ENCODE measurements at regions of chr12 and their contacts with region 1.

Region 1: GRCh38 chr12:119036878-119037825 is 55.8 kb downstream of the SRRM4 start:
- DNase-seq: peak in 1 of 2 experiments; percentile 74
- H3K4me3 ChIP-seq: no peak overlapping the region
- H3K27ac ChIP-seq: no peak overlapping the region
- H3K4me1 ChIP-seq: no peaks in the 10 kb centered on the region
- H3K27me3 ChIP-seq: no peaks in the 10 kb centered on the region
- CTCF ChIP-seq: peak; percentile 53 to 69 (median 65)
- EP300 ChIP-seq: no peak
- POLR2A ChIP-seq: no peak
- RAD21 ChIP-seq: peak; percentile 41 to 60

Region 2: DNA sequence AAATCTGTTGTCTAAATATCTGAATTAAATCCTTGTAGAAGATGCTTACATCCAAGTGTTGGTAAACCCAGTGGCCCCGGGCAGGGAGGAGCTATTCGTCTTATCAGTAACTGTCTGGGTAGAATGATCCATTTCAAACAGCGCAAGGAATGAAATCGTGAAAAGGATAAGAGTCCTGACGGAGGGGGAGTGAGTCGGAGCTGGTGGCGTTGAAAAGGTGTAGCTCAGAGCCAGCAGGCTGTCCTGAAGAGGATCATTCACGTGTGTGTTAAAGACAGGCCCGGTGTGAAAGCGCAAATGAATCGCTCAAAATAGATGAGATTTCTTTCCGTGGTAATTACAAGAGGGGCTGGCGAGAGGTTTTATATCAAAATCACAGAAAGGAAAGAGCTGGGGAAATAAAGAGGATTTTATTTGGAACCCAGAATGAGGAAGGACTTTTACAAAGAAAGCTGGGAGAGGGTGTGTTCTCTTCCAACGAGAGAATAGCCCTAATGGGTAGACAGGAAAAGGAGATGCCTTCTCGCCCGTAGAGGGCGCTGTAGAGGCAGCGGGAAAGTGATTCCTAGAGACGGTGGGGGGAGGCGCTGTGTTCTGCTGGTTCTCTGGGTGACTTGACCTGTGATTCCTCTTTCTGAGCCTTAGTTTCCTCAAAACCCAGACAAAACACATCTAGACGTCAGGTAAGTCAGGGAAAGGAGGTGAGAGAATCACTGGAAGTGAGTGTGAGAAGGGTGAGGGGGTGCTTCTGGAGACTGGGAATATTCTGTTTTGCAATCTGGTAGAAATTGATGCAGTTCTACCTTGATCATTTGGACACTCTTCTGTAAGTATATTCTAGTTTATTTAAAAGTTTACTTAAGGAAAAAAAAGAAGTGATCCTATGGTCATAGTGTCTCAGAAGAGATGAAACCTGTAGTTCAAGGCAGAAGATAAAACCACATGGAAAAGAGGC is 16.5 kb before region 1 on chr12:
- CTCF ChIA-PET with region 1: interaction called, 17 read pairs
- POLR2A ChIA-PET with region 1: interaction called, 3 read pairs
- DNase-seq: peak; percentile 54 to 94
- H3K4me3 ChIP-seq: peak overlapping the region in 1 of 4 experiments; percentile 31; a peak in 1 of 8 replicates
- H3K27ac ChIP-seq: no peak overlapping the region
- H3K4me1 ChIP-seq: peaks cover 6 to 26% (median 17%) of the 10 kb centered on the region in 4 experiments; a peak in 6 of 7 replicates
- H3K27me3 ChIP-seq: no peaks in the 10 kb centered on the region
- CTCF ChIP-seq: peak; percentile 93 to 99 (median 98)
- EP300 ChIP-seq: no peak
- POLR2A ChIP-seq: no peak
- RAD21 ChIP-seq: peak; percentile 82

Region 3: GRCh38 chr12:119050663-119051062 is 13.5 kb after region 1 on chr12:
- CTCF ChIA-PET with region 1: interaction called, 33 read pairs
- POLR2A ChIA-PET with region 1: no interaction called
- DNase-seq: no peak
- H3K4me3 ChIP-seq: no peak overlapping the region
- H3K27ac ChIP-seq: no peak overlapping the region
- H3K4me1 ChIP-seq: no peaks in the 10 kb centered on the region
- H3K27me3 ChIP-seq: no peaks in the 10 kb centered on the region; a peak in 1 of 7 replicates
- CTCF ChIP-seq: no peak
- EP300 ChIP-seq: no peak
- POLR2A ChIP-seq: no peak
- RAD21 ChIP-seq: no peak

Region 4: DNA sequence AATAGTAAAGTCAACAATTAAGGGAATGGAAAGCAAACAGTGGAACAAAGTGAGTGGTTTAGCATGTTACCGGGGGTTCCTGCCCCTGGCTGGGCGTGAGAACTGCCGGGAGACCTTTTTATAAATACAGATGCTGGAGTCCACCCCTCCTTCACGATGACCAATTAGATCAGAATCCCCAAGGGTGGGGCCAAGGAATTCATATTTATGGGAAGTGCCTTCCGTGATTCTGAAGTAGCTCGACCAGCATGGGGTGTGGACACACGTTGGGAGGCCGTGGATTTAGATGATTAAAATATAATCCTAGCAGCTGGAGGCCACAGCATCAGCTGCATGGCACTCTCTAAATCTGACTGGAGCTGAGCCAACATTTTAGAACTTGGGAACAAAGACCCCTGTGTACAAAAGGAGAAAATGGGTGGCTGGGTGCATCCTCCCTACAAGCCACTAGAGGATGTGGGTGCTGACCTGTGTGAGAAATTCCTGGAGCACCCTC is 32.0 kb after region 1 on chr12:
- CTCF ChIA-PET with region 1: interaction called, 10 read pairs
- POLR2A ChIA-PET with region 1: no interaction called
- DNase-seq: no peak
- H3K4me3 ChIP-seq: no peak overlapping the region
- H3K27ac ChIP-seq: no peak overlapping the region
- H3K4me1 ChIP-seq: peaks cover 0 to 14% (median under 1%) of the 10 kb centered on the region in 4 experiments; a peak in 1 of 7 replicates
- H3K27me3 ChIP-seq: no peaks in the 10 kb centered on the region; a peak in 2 of 7 replicates
- CTCF ChIP-seq: peak in 1 of 3 experiments; percentile 16; a peak in 1 of 4 replicates
- EP300 ChIP-seq: no peak
- POLR2A ChIP-seq: no peak
- RAD21 ChIP-seq: no peak; a peak in 1 of 4 replicates

Measured in H1 (cell line).